Astrocyte of the cerebellum (primary cell): ENCODE measurements at regions of chr4 and their contacts with region 1.

Region 1: GRCh38 chr4:2080429-2081300 is 21.5 kb downstream of the NAT8L start:
- DNase-seq: no peak
- H3K4me3 ChIP-seq: no peak overlapping the region
- CTCF ChIP-seq: no peak

Region 2: DNA sequence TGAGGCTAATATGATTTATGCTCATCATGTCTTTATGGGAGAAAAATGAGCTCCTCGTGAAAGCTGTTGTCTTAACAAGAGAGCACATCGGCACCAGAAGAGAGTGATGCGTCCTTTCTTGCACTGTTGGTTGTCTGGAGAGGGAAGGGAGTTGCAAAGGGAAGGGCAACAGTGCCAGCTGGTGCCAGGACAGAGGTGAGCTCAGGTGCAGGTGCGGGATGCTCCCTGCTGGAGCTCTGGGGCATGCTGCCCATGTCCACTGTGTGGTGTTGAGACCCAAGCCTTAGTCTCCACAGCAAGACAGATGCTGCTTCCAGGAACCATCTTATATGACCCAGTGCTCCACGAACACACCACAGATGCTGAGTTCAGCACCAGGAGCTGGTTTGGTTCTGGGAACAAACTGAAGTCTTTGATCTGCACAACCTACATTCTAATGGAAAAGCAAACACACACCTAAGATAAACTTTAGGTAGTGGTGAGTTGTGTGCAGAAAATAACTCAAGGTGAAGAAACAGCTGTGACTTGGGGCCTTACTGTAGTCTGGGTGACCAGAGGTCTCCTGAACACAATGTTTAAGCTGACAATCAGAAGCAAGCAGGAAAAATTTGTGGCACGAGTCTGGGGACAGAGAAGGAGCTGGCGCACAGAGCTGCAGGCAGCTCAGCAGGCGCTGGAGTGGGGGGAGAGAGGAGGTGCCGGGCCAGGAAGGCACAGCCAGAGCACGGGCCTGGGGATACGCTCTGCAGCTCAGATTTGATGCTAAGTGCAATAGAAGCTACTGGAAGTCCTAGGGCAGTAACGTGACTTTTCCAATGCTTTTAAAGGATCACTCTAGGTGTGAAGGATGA is 88.0 kb after region 1 on chr4:
- in situ Hi-C with region 1: loop called (anchors 5 kb)
- DNase-seq: no peak
- H3K4me3 ChIP-seq: no peak overlapping the region
- CTCF ChIP-seq: no peak